A549 (cell line): ENCODE measurements at regions of chr6 and their contacts with region 1.

Region 1: DNA sequence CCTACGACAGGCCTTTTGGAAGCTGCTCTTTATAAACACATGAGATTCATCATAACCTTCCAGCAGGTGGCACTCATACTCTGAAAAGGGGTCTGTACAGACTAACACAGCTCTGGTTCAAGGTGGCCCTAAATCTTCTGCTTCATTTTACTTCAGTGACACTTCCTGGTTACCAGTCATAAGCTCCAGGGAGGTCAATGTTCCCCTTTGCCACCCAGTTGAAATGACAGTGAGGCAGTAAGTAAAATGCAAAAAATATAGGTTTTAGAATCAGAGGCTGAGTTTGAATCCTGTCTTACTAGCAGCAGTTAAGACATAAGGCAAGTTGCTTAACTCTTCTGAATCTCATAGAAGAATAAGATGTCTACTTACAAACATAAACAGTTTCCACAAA is 132.8 kb downstream of the CDK19 start:
- DNase-seq: peak; percentile 35 to 83
- ATAC-seq: peak; percentile 95 to 99
- H3K4me3 ChIP-seq: no peak overlapping the region
- H3K27ac ChIP-seq: peak overlapping the region; percentile 60 to 64; a peak in 3 of 6 replicates
- H3K4me1 ChIP-seq: peaks cover 20% of the 10 kb centered on the region
- CTCF ChIP-seq: peak; percentile 74
- EP300 ChIP-seq: no peak
- POLR2A ChIP-seq: no peak
- RAD21 ChIP-seq: peak; percentile 86 to 91

Region 2: DNA sequence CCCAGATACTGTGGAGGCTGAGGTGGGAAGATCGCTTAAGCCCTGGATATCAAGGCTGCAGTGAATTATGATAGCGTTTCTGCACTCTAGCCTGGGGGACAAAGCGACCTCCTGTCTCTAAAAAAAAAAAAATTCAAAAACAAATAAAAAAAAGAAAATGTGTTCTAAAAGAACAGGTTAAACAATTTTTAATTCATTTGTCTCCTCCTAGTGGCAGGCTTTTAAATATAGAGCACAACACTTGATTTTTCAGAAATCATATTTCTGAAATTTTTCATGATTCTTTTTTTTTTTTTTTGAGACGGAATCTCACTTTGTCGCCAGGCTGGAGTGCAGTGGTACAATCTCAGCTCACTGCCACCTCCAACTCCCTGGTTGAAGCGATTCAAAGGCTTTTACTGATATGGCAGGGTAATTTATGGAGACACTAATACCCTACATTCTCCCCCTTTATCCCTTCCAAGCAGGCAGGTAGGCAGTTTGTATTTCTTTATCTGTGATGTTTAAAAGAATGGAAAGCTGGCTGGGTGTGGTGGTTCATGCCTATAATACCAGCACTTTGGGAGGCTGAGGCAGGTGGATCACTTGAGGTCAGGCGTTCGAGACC is 267.3 kb after region 1 on chr6:
- CTCF ChIA-PET with region 1: interaction called, 23 read pairs
- POLR2A ChIA-PET with region 1: interaction called, 3 read pairs
- DNase-seq: peak in 1 of 2 experiments; percentile 38
- ATAC-seq: no peak
- H3K4me3 ChIP-seq: no peak overlapping the region
- H3K27ac ChIP-seq: peak overlapping the region; percentile 96 to 97
- H3K4me1 ChIP-seq: peaks cover 63% of the 10 kb centered on the region
- CTCF ChIP-seq: peak; percentile 69
- EP300 ChIP-seq: no peak
- POLR2A ChIP-seq: no peak
- RAD21 ChIP-seq: peak; percentile 65 to 72